ENCODE measurements at regions of chr18 and their contacts with region 1.

Region 1: GRCh38 chr18:49161627-49162026 is 210.9 kb upstream of the SMAD7 start:
- DNase-seq: peak; percentile 72
- H3K4me3 Mint-ChIP-seq: no peak overlapping the region
- H3K27ac Mint-ChIP-seq: no peak overlapping the region
- H3K4me1 Mint-ChIP-seq: peaks cover 10% of the 10 kb centered on the region
- H3K27me3 Mint-ChIP-seq: no peaks in the 10 kb centered on the region

Region 2: DNA sequence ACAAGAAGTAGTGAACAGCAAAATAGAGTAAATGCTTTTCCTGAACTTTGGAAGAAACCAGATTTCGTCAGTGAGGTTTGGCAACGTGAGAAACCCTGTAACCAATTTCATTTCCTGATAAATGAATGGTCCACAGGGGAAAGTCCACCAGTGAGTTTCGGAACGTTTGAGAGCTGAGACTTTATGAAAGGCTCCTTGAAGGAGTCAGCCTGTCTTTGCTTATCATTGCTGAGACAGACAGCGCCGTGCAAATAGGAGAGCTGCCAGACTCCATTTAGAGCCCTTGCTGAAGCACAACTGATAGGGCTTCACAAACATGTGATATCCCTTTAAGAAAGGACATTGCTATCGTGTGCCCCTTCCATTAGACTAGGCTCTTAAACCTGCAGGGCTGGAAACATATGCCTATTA is 89.1 kb before region 1 on chr18:
- intact Hi-C with region 1: loop called (anchors 5 kb)
- DNase-seq: no peak
- H3K4me3 Mint-ChIP-seq: no peak overlapping the region
- H3K27ac Mint-ChIP-seq: peak overlapping the region; percentile 59
- H3K4me1 Mint-ChIP-seq: peaks cover 5% of the 10 kb centered on the region
- H3K27me3 Mint-ChIP-seq: no peaks in the 10 kb centered on the region

Region 3: DNA sequence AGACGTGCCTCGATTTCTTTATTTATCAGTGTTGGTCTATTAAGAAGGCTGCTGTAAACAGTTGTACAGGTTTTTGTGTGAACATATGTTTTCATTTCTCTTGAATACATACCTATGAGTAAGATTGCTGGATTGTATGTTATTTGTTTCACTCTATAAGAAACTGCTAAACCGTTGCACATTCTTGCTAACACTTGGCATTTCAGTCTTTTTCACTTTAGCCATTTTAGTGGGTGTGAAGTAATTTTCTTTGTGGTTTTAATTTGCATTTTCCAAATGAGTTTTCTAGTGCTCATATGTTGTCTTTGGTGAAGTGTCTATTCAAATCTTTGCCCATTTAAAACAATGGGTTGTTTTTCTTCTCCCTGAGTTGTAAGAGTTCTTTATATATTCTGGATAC is 10.6 kb after region 1 on chr18:
- intact Hi-C with region 1: loop called (anchors 1 kb)
- DNase-seq: no peak
- H3K4me3 Mint-ChIP-seq: peak overlapping the region; percentile 32
- H3K27ac Mint-ChIP-seq: peak overlapping the region; percentile 86
- H3K4me1 Mint-ChIP-seq: peaks cover 30% of the 10 kb centered on the region
- H3K27me3 Mint-ChIP-seq: peaks cover 1% of the 10 kb centered on the region

Measured in activated CD4-positive, alpha-beta T cell treated with anti-CD3 and anti-CD28 coated beads, Interleukin-2, amount 10 ng/mL, durations not matched to agents 24 days and 14 days (primary cell).